ENCODE measurements at regions of chrX and their contacts with region 1.

Region 1: GRCh38 chrX:115584696-115585095 is 23.7 kb downstream of the PLS3 start:
- DNase-seq: peak; percentile 21
- ATAC-seq: peak; percentile 79
- H3K4me3 Mint-ChIP-seq: no peak overlapping the region
- H3K27ac Mint-ChIP-seq: no peak overlapping the region
- H3K4me1 Mint-ChIP-seq: peaks cover 7% of the 10 kb centered on the region
- H3K27me3 Mint-ChIP-seq: no peaks in the 10 kb centered on the region
- CTCF ChIP-seq: no peak

Region 2: DNA sequence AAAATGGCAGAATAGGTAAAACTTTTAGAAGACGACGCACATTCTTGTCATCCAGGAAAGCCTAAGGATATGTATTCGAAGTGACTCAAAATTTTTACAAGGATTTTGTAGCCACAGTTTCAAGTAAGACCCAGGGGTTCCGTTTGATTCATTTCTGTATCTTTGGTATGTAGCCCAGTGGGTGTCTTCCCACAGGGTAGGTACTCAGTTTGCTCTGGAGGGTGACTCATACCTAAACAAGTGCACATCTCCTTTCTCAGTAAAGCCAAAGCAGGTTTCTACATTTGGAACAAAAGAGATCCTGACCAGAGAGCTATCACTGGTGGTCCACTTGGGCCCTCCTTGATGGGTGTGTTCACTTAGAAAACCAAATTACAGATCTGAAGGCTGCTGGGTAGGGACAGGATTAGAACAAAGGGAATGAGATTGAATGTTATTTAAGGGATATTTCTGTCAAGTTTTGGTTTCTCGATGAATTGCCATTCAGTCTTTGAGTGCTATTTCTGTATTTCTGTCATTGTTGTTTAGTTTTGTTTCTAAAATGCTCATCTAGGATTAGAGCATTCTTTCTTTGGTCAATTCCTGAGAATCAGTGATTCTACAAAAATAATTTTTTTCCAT is 32.4 kb after region 1 on chrX:
- CTCF ChIA-PET with region 1: no interaction called
- POLR2A ChIA-PET with region 1: no interaction called
- intact Hi-C with region 1: loop called (anchors 5 kb)
- DNase-seq: peak; percentile 7
- ATAC-seq: peak; percentile 78
- H3K4me3 Mint-ChIP-seq: no peak overlapping the region
- H3K27ac Mint-ChIP-seq: no peak overlapping the region
- H3K4me1 Mint-ChIP-seq: peaks cover 6% of the 10 kb centered on the region
- H3K27me3 Mint-ChIP-seq: no peaks in the 10 kb centered on the region
- CTCF ChIP-seq: no peak

Measured in activated CD8-positive, alpha-beta T cell treated with anti-CD3 and anti-CD28 coated beads for 36 hours (primary cell).